CD4-positive, alpha-beta T cell (primary cell): ENCODE measurements at regions of chr20 and their contacts with region 1.

Region 1: GRCh38 chr20:45011108-45011526 is 44.8 kb downstream of the STK4 start:
- DNase-seq: peak in 13 of 14 experiments; percentile 18 to 73 (median 44)
- ATAC-seq: peak; percentile 75
- H3K4me3 ChIP-seq: no peak overlapping the region
- H3K4me3 Mint-ChIP-seq: peak overlapping the region; percentile 0
- H3K27ac ChIP-seq: no peak overlapping the region
- H3K27ac Mint-ChIP-seq: peak overlapping the region; percentile 16
- H3K4me1 ChIP-seq: peaks cover 9% of the 10 kb centered on the region
- H3K4me1 Mint-ChIP-seq: peaks cover 70% of the 10 kb centered on the region
- H3K27me3 ChIP-seq: no peaks in the 10 kb centered on the region
- H3K27me3 Mint-ChIP-seq: no peaks in the 10 kb centered on the region
- CTCF ChIP-seq: peak; percentile 81

Region 2: DNA sequence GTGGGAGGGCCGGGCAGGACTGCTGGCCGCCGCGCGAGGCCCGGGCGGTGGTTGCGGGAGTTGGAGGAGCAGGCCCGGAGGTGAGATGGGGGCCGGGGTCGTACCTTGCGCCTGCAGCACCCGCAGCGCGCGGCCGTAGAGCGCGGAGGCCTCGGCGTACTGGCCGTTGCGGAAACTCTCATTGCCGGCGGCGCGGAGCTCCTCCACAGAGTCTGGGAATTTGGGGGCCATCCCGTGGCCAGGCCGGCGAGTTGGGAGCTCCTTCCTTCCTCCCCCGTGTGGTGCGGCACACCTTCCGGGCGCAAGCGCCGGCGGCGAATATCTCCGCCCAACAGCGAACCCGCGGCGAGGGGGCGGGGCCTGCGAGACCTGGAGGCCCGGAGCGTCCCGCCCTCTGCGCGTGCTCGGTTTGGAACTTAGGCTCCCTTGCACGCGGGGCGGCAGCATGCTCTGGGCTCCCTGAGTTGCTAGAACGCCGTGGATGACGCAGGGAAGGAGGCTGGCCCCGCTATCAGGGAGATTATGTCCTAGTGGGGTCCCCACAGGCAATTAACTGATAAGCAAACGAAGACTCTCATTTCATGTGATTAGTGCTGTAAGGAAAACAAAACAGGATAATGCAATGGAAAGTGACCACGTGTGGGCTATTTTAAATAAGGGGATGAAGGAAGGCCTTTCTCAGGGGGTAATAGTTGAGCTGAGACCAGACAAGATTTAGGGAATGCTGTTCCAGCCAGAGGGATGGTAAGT is 50.8 kb before region 1 on chr20 and contains the start of gene TOMM34:
- CTCF ChIA-PET with region 1: interaction called, 3 read pairs
- POLR2A ChIA-PET with region 1: interaction called, 3 read pairs
- intact Hi-C with region 1: loop called in 1 of 2 experiments (anchors 2 kb)
- DNase-seq: peak; percentile 89 to 98 (median 94)
- ATAC-seq: peak; percentile 97
- H3K4me3 ChIP-seq: peak within 1 kb of the TSS; percentile 78
- H3K4me3 Mint-ChIP-seq: peak within 1 kb of the TSS; percentile 98
- H3K27ac ChIP-seq: peak within 1 kb of the TSS; percentile 41 to 66
- H3K27ac Mint-ChIP-seq: peak within 1 kb of the TSS; percentile 81
- H3K4me1 ChIP-seq: peaks cover 35% of the 10 kb centered on the region
- H3K4me1 Mint-ChIP-seq: peaks cover 52% of the 10 kb centered on the region
- H3K27me3 ChIP-seq: no peaks in the 10 kb centered on the region
- H3K27me3 Mint-ChIP-seq: no peaks in the 10 kb centered on the region
- CTCF ChIP-seq: no peak
- total RNA-seq, gene TOMM34: 5.6 to 5.9 TPM

Region 3: DNA sequence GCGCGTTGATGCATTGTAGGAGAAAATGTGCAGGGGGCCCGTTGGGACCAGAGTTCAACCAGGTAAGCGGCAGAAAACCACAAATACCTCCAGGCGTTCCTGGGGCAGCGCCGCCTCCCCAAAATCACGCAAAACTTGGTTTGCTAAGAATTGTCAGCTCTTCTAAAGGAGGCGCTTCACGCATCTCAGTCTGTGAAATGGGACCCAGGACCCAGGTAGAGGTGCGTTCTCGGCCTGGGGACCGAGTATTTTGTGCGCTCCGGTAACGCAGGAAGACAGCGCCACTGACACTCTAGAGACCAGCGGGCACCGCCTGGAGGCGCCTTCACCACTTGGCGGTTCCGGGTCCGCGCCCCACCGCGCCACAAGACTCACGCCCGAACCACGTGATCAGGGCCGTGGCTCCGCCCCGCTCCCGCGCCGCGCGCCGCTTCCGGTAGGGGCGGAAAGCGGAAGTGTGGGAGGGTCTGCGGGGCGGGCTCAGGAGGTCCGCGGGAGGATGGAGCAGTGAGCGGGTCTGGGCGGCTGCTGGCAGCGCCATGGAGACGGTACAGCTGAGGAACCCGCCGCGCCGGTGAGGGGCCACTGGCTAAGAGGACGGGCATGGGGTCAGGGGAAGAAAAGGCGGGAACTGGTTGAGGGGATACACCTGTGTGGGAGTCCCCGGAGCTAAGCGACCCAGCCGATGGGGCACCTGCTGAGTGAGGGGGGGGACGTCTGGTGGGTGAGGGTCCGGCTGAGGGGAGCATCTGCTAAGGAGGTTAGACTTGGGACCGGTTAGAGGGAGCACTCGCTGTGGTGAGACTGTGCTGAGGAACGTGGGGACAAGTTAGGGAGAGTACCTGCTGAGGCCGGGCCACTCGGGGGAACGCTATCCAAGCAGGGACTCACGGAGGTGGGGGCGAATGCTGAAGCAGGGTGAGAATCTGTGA is 44.8 kb before region 1 on chr20 and contains the start of gene STK4:
- CTCF ChIA-PET with region 1: interaction called, 5 read pairs
- POLR2A ChIA-PET with region 1: interaction called, 5 read pairs
- intact Hi-C with region 1: loop called in 1 of 2 experiments (anchors 2 kb)
- DNase-seq: peak; percentile 92 to 99 (median 96)
- ATAC-seq: peak; percentile 78
- H3K4me3 ChIP-seq: peak within 1 kb of the TSS; percentile 68
- H3K4me3 Mint-ChIP-seq: peak within 1 kb of the TSS; percentile 92
- H3K27ac ChIP-seq: peak within 1 kb of the TSS; percentile 88 to 90
- H3K27ac Mint-ChIP-seq: peak within 1 kb of the TSS; percentile 86
- H3K4me1 ChIP-seq: peaks cover 16% of the 10 kb centered on the region
- H3K4me1 Mint-ChIP-seq: peaks cover 51% of the 10 kb centered on the region
- H3K27me3 ChIP-seq: no peaks in the 10 kb centered on the region
- H3K27me3 Mint-ChIP-seq: no peaks in the 10 kb centered on the region
- CTCF ChIP-seq: peak; percentile 70
- total RNA-seq, gene STK4: 265 to 277 TPM

Region 4: GRCh38 chr20:44990425-44990824 is 20.7 kb before region 1 on chr20:
- CTCF ChIA-PET with region 1: interaction called, 4 read pairs
- POLR2A ChIA-PET with region 1: interaction called, 3 read pairs
- intact Hi-C with region 1: loop called in 1 of 2 experiments (anchors 2 kb)
- DNase-seq: peak in 4 of 14 experiments; percentile 22 to 46 (median 27)
- ATAC-seq: peak; percentile 50
- H3K4me3 ChIP-seq: peak overlapping the region; percentile 45
- H3K4me3 Mint-ChIP-seq: peak overlapping the region; percentile 88
- H3K27ac ChIP-seq: peak overlapping the region; percentile 62 to 66
- H3K27ac Mint-ChIP-seq: peak overlapping the region; percentile 88
- H3K4me1 ChIP-seq: peaks cover 41% of the 10 kb centered on the region
- H3K4me1 Mint-ChIP-seq: peaks cover 82% of the 10 kb centered on the region
- H3K27me3 ChIP-seq: no peaks in the 10 kb centered on the region
- H3K27me3 Mint-ChIP-seq: no peaks in the 10 kb centered on the region
- CTCF ChIP-seq: no peak

Region 5: DNA sequence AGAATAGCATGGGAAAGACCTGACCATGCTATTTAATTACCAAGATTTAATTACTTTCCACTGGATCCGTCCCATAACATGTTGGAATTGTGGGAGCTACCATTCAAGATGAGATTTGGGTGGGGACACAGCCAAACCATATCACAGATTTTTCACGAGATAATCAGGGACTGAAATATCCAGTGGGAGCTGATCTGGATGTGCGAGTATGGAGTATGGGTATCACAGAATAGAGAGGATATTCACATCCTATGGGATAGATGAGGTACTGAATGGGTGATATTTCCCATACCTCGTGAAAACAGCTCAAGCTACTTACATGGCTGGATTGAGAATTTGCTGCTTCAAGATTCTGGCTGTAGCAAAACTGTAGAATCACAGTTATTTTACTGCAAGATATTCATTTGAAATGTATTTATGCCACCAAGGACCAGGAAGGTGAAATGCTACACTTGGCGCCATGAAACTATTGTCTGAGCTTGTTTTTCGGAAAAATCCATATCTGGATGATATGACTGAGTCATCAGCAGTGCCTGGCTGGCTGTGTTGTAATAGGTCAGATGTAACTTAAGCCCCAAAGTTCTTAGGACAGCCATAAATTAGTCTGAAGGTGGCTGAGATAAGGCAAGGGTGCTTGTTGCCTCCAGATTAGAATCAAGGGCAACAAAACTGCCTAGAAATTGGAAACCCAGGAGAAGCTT is 60.0 kb after region 1 on chr20:
- CTCF ChIA-PET with region 1: no interaction called
- POLR2A ChIA-PET with region 1: no interaction called
- intact Hi-C with region 1: no loop called
- DNase-seq: no peak
- ATAC-seq: no peak
- H3K4me3 ChIP-seq: no peak overlapping the region
- H3K4me3 Mint-ChIP-seq: no peak overlapping the region
- H3K27ac ChIP-seq: no peak overlapping the region
- H3K27ac Mint-ChIP-seq: peak overlapping the region; percentile 69
- H3K4me1 ChIP-seq: peaks cover 10% of the 10 kb centered on the region
- H3K4me1 Mint-ChIP-seq: peaks cover 59% of the 10 kb centered on the region
- H3K27me3 ChIP-seq: no peaks in the 10 kb centered on the region
- H3K27me3 Mint-ChIP-seq: no peaks in the 10 kb centered on the region
- CTCF ChIP-seq: no peak

Region 6: DNA sequence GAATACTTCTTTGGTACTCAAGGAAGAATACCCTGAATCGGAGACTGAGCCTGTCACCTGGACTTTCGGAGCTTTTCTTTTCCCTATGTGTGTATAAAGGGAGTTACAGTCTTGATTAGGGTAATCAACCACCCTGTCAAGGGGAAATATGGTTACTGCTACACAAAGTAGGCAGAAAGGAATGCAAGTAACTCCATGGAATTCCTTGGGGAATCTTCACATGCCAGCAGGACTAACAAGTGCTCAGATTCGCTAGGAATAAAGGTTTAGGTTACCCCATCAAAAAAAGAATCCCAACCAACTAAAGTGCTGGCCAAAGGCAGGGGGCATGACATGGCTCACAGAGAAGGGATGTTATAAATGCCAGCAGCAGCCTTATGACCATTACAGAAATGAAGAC is 79.4 kb after region 1 on chr20:
- CTCF ChIA-PET with region 1: interaction called, 30 read pairs
- POLR2A ChIA-PET with region 1: no interaction called
- intact Hi-C with region 1: loop called (anchors 5 kb)
- DNase-seq: no peak
- ATAC-seq: no peak
- H3K4me3 ChIP-seq: no peak overlapping the region
- H3K4me3 Mint-ChIP-seq: no peak overlapping the region
- H3K27ac ChIP-seq: no peak overlapping the region
- H3K27ac Mint-ChIP-seq: no peak overlapping the region
- H3K4me1 ChIP-seq: no peaks in the 10 kb centered on the region
- H3K4me1 Mint-ChIP-seq: peaks cover 11% of the 10 kb centered on the region
- H3K27me3 ChIP-seq: no peaks in the 10 kb centered on the region
- H3K27me3 Mint-ChIP-seq: no peaks in the 10 kb centered on the region
- CTCF ChIP-seq: no peak

Region 7: DNA sequence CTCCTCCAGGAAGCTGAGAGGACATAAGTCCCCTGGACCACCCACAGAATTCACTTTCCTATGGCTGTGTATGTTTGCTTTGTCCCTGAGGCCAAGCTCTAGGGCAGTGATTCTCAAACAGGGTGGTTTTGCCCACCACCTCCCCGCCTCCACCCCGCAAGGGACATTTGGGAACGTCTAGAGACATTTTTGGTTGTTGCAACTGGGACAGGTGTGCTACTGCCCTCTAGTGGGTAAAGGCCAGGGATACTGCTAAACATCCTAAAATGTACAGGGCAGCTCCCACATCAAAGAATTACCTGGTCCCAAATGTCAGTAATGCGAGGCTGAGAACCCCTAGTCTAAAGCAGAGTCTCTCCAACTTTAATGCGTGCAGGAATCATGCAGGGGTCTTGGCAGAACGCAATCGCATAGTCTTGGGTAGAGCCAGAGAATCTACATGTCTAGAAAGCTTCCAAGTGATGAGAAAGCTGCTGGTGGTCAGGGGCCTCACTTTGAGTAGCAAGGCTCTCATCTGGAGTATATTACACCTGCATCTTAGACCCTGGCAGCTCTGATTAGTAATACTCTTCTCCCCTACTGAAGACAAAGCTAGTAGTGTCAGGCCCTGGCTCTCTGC is 84.7 kb after region 1 on chr20:
- CTCF ChIA-PET with region 1: interaction called, 30 read pairs
- POLR2A ChIA-PET with region 1: no interaction called
- intact Hi-C with region 1: loop called (anchors 5 kb)
- DNase-seq: peak; percentile 31 to 81 (median 46)
- ATAC-seq: peak; percentile 58
- H3K4me3 ChIP-seq: no peak overlapping the region
- H3K4me3 Mint-ChIP-seq: peak overlapping the region; percentile 15
- H3K27ac ChIP-seq: no peak overlapping the region
- H3K27ac Mint-ChIP-seq: no peak overlapping the region
- H3K4me1 ChIP-seq: peaks cover 13% of the 10 kb centered on the region
- H3K4me1 Mint-ChIP-seq: peaks cover 16% of the 10 kb centered on the region
- H3K27me3 ChIP-seq: peaks cover 25 to 43% of the 10 kb centered on the region in 2 experiments
- H3K27me3 Mint-ChIP-seq: peaks cover 44% of the 10 kb centered on the region
- CTCF ChIP-seq: peak; percentile 72

Region 8: DNA sequence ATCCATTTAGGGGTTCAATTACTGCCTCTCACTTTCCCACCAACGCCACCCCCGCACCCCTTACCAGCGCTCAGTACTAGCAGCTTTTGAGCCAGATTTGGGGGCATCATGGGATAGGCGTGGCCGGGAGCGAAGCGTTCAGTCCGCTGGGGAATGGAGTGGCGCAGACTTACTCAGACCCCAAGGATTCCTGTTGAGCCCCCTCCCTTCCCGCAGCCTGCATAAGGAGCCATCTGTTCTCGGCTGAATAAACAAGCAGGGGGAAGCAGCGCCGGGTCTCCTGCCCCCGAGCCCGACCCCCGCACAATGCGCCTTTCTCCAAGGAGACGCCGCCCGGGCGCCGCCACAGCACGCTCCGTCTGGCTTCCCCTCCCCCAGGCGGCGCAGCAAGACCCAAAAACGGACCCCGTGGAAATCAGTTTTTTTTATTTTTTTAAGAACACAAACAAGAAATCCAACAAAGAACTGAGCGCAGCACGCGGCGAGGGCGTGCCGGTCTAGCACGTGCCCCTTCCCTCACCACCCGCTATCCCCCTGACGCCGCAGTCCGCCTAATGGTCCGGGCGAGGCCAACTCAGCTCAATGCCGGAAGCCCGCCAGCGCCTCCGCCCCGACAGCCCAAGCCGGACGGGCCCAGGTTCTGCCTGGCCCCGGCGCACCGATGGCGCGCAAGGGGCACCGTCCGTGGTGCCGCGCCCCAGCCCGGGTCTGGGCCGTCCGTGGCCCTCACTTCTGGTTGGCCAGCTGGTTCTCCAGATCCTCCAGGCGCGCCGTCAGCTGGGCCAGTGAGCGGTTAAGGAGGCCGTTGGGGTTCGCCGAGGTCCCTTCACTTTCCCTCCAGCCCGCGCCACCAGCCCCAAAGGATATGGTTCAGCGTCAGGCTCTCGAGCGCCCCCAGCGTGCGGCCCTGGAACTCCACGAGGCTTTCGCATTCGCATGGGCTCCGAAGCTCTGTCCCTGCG is 282.2 kb after region 1 on chr20:
- CTCF ChIA-PET with region 1: no interaction called
- POLR2A ChIA-PET with region 1: no interaction called
- intact Hi-C with region 1: loop called in 1 of 2 experiments (anchors 5 kb)
- DNase-seq: peak; percentile 63 to 84 (median 74)
- ATAC-seq: peak; percentile 92
- H3K4me3 ChIP-seq: peak overlapping the region; percentile 40
- H3K4me3 Mint-ChIP-seq: peak overlapping the region; percentile 82
- H3K27ac ChIP-seq: no peak overlapping the region
- H3K27ac Mint-ChIP-seq: no peak overlapping the region
- H3K4me1 ChIP-seq: peaks cover 17% of the 10 kb centered on the region
- H3K4me1 Mint-ChIP-seq: no peaks in the 10 kb centered on the region
- H3K27me3 ChIP-seq: peaks cover 15 to 23% of the 10 kb centered on the region in 2 experiments
- H3K27me3 Mint-ChIP-seq: peaks cover 66% of the 10 kb centered on the region
- CTCF ChIP-seq: peak; percentile 95